ENCODE measurements at regions of chr1 and their contacts with region 1.

Region 1: DNA sequence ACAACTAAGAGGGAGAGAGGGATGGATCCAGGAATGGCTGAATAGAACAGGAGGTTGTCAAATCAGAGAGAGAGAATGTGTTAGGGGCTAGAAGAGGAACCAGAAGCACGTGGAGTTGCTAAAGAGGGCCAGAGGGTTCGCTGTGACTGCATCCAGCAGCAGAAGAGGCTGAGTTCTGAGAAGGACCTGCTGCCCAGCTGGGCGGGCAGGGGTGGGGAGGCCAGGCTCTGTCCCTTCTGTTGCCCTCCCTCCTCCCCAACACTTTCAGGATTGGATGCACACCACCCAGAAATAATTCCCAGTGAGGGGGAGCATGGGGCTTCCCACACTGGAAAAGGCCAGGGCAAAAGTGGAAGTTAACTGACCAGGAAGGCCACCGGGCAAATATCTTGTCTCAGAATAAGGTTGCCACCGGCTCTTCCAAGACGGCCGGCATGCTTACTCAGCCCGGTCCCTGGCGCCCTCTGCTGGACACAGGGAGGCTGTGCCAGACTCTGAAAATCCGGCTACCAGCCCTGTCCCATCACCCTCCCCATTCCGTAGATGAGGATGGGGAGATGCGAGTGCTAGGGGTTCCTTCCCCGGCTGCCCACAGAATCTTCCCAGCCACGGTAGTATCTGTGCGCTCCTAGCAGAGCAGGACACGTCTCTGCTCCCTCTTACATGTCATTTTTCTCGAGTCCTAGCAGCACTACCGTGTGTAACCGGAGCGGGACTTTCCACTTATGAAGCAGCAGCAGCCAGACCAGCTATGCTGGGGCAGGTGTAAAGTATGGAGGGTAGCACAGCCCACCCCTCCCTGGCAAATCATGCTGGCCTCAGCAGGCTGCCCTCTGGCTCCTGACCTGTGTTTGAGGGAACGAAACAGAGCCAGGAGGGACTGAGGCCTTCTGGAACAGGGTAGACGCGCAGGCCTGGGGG is 46.8 kb upstream of the A3GALT2 start:
- DNase-seq: peak; percentile 65 to 87 (median 82)
- ATAC-seq: peak; percentile 98
- H3K4me3 ChIP-seq: no peak overlapping the region
- H3K4me3 Mint-ChIP-seq: no peak overlapping the region
- H3K27ac ChIP-seq: no peak overlapping the region
- H3K27ac Mint-ChIP-seq: peak overlapping the region in 1 of 9 donors; percentile 26
- H3K4me1 ChIP-seq: no peaks in the 10 kb centered on the region
- H3K4me1 Mint-ChIP-seq: peaks cover 0 to 2% (median 0%) of the 10 kb centered on the region in 7 donors
- H3K27me3 ChIP-seq: no peaks in the 10 kb centered on the region
- H3K27me3 Mint-ChIP-seq: peaks cover 0 to 11% (median 0%) of the 10 kb centered on the region in 5 donors

Region 2: GRCh38 chr1:33094971-33095604 is 272.7 kb before region 1 on chr1:
- CTCF ChIA-PET with region 1: no interaction called
- POLR2A ChIA-PET with region 1: no interaction called
- intact Hi-C with region 1: loop called in 1 of 2 experiments (anchors 1 kb)
- DNase-seq: no peak
- ATAC-seq: no peak
- H3K4me3 ChIP-seq: no peak overlapping the region
- H3K4me3 Mint-ChIP-seq: no peak overlapping the region
- H3K27ac ChIP-seq: no peak overlapping the region
- H3K27ac Mint-ChIP-seq: peak overlapping the region in 1 of 9 donors; percentile 24
- H3K4me1 ChIP-seq: peaks cover 28 to 29% of the 10 kb centered on the region in 2 donors
- H3K4me1 Mint-ChIP-seq: peaks cover 27 to 70% (median 46%) of the 10 kb centered on the region in 7 donors
- H3K27me3 ChIP-seq: no peaks in the 10 kb centered on the region
- H3K27me3 Mint-ChIP-seq: no peaks in the 10 kb centered on the region

Region 3: DNA sequence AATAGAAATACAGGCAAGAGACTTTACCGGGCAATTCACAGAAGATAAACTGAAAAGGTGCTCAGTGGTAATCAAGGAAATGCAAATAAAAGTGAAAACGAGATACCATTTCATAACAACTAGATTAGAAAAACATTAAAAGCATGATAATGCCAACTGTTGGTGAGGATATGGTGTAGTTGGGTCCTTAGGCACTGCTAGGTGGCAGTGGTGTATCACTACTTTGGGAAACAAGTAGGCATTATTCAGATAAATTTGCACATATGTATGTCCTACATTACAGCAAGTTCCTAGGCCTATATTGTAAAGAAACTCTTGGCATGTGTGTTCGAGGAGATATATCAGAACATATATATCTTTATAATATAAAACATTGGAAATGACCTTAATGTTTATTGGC is 255.8 kb before region 1 on chr1:
- CTCF ChIA-PET with region 1: no interaction called
- POLR2A ChIA-PET with region 1: no interaction called
- intact Hi-C with region 1: loop called (anchors 1 kb)
- DNase-seq: peak in 1 of 9 donors; percentile 27
- ATAC-seq: peak; percentile 41
- H3K4me3 ChIP-seq: no peak overlapping the region
- H3K4me3 Mint-ChIP-seq: no peak overlapping the region
- H3K27ac ChIP-seq: no peak overlapping the region
- H3K27ac Mint-ChIP-seq: no peak overlapping the region
- H3K4me1 ChIP-seq: no peaks in the 10 kb centered on the region
- H3K4me1 Mint-ChIP-seq: peaks cover 0 to 12% (median 0%) of the 10 kb centered on the region in 7 donors
- H3K27me3 ChIP-seq: no peaks in the 10 kb centered on the region
- H3K27me3 Mint-ChIP-seq: no peaks in the 10 kb centered on the region

Region 4: GRCh38 chr1:33219881-33220661 is 147.7 kb before region 1 on chr1:
- CTCF ChIA-PET with region 1: no interaction called
- POLR2A ChIA-PET with region 1: no interaction called
- intact Hi-C with region 1: loop called in 1 of 2 experiments (anchors 2 kb)
- DNase-seq: no peak
- ATAC-seq: no peak
- H3K4me3 ChIP-seq: no peak overlapping the region
- H3K4me3 Mint-ChIP-seq: no peak overlapping the region
- H3K27ac ChIP-seq: no peak overlapping the region
- H3K27ac Mint-ChIP-seq: no peak overlapping the region
- H3K4me1 ChIP-seq: no peaks in the 10 kb centered on the region
- H3K4me1 Mint-ChIP-seq: peaks cover 0 to 6% (median 0%) of the 10 kb centered on the region in 7 donors
- H3K27me3 ChIP-seq: no peaks in the 10 kb centered on the region
- H3K27me3 Mint-ChIP-seq: peaks cover 0 to 18% (median 9%) of the 10 kb centered on the region in 5 donors

Region 5: GRCh38 chr1:33472349-33472980 is 104.7 kb after region 1 on chr1 and contains the start of gene ZSCAN20:
- CTCF ChIA-PET with region 1: interaction called, 5 read pairs
- POLR2A ChIA-PET with region 1: no interaction called
- intact Hi-C with region 1: loop called (anchors 5 kb)
- DNase-seq: peak; percentile 58 to 82 (median 79)
- ATAC-seq: peak; percentile 96
- H3K4me3 ChIP-seq: peak within 1 kb of the TSS; percentile 47
- H3K4me3 Mint-ChIP-seq: peak within 1 kb of the TSS; percentile 84 to 98 (median 92)
- H3K27ac ChIP-seq: peak within 1 kb of the TSS; percentile 60
- H3K27ac Mint-ChIP-seq: peak within 1 kb of the TSS; percentile 37 to 95 (median 76)
- H3K4me1 ChIP-seq: peaks cover 11 to 14% of the 10 kb centered on the region in 2 donors
- H3K4me1 Mint-ChIP-seq: peaks cover 20 to 39% (median 30%) of the 10 kb centered on the region in 7 donors
- H3K27me3 ChIP-seq: no peaks in the 10 kb centered on the region
- H3K27me3 Mint-ChIP-seq: no peaks in the 10 kb centered on the region
- total RNA-seq, gene ZSCAN20: 0.77 to 3.0 (median 2.6) TPM